ENCODE measurements at regions of chr15 and their contacts with region 1.

Region 1: DNA sequence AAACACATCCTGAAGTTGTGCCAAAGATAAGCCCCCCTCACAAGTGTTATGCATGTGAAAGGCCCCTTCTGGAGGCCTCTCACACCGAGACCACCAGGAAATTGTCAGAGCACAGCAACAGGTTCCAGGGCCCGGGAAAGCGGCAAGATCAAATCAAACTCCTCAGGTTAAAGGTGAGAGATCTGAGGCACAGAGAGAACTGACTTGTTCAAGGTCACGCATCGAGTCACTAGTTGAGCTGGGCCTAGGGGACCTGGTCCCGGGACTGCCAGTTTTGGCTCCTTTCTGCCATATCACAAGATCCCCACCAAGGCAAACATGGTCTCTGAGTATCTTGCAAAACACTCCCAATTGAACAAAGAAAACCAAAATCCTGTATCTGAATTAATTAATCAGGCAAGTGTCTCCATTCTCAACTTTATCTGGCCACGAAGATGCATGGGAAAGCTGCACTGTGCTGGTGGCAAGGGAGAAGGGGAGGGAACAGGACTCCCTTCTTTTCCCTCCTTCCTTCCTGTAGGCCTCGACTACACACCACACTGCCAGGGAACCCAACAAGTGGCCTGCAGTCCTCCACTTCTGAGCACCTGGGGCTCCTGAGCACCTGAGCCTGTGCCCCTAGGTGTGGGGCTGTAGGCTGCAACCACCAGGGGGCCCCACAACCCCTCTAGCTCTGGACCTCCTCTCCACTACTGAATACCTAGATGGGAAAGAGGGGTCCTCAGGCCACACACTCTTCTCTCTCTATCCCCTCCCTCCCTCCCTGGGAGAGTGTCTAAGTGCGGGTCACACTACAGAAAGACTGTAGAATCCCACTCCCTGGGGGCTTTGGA is 37.3 kb downstream of the ANP32A start:
- DNase-seq: peak; percentile 48
- ATAC-seq: peak; percentile 84
- H3K4me3 Mint-ChIP-seq: no peak overlapping the region
- H3K27ac Mint-ChIP-seq: no peak overlapping the region
- H3K4me1 Mint-ChIP-seq: peaks cover 31% of the 10 kb centered on the region
- H3K27me3 Mint-ChIP-seq: no peaks in the 10 kb centered on the region
- CTCF ChIP-seq: no peak

Region 2: GRCh38 chr15:68550481-68551295 is 232.8 kb before region 1 on chr15:
- CTCF ChIA-PET with region 1: no interaction called
- POLR2A ChIA-PET with region 1: no interaction called
- intact Hi-C with region 1: loop called (anchors 5 kb)
- DNase-seq: peak; percentile 68
- ATAC-seq: peak; percentile 67
- H3K4me3 Mint-ChIP-seq: no peak overlapping the region
- H3K27ac Mint-ChIP-seq: no peak overlapping the region
- H3K4me1 Mint-ChIP-seq: no peaks in the 10 kb centered on the region
- H3K27me3 Mint-ChIP-seq: peaks cover 22% of the 10 kb centered on the region
- CTCF ChIP-seq: peak; percentile 65

Region 3: DNA sequence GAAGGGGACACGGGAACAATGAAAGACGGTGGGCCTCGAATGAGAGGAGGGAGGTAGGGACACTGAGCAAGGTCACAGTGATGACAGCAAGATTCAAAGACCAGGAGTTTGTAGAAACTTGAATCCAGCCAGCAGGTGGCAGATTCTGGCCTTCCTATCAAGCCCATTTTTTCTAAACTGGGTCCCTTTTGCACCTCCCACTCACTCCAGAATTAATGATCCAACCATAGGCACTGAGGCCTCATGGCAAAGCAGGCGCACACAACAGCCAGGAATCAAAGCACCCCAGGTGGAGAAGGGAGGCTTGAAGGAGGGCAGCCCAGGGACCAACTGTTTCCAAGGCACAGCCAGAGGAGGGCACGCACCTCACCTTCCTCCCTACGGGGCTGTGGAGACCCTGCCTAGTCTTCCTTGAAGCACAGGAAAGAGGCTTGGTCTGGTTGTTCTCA is 52.9 kb before region 1 on chr15:
- CTCF ChIA-PET with region 1: no interaction called
- POLR2A ChIA-PET with region 1: no interaction called
- intact Hi-C with region 1: loop called (anchors 2 kb)
- DNase-seq: no peak
- ATAC-seq: no peak
- H3K4me3 Mint-ChIP-seq: no peak overlapping the region
- H3K27ac Mint-ChIP-seq: no peak overlapping the region
- H3K4me1 Mint-ChIP-seq: peaks cover 21% of the 10 kb centered on the region
- H3K27me3 Mint-ChIP-seq: peaks cover 2% of the 10 kb centered on the region
- CTCF ChIP-seq: no peak

Region 4: DNA sequence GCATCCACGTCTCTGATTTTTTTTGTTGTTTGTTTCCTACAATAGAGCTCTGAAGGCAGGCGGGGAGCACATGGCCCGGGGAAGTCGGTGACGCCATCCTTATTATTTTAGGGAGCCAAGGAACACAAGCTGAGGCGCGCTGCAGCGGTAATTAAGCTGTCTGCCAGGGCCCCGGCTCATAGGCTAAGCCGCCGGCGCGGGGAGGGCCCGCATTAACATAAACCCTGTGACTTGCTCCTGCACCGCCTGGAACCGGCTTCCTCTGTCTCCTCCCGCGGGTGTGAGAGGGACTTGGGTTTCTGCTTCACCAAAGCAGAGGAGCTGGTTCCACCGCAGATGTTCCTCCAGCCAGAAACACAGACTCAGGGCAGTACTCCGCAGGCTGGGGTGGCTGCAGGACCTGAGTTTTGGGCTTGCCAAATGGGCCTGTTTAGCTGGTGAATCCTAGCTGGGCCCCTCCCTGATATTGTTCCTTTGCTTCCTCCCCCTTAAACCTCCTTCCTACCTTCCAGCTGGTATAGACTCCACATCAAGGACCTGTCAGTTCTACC is 11.9 kb after region 1 on chr15:
- CTCF ChIA-PET with region 1: interaction called, 18 read pairs
- POLR2A ChIA-PET with region 1: no interaction called
- intact Hi-C with region 1: no loop called
- DNase-seq: peak; percentile 55
- ATAC-seq: peak; percentile 62
- H3K4me3 Mint-ChIP-seq: peak overlapping the region; percentile 75
- H3K27ac Mint-ChIP-seq: peak overlapping the region; percentile 85
- H3K4me1 Mint-ChIP-seq: peaks cover 97% of the 10 kb centered on the region
- H3K27me3 Mint-ChIP-seq: no peaks in the 10 kb centered on the region
- CTCF ChIP-seq: no peak

Region 5: GRCh38 chr15:68829068-68829467 is 45.6 kb after region 1 on chr15:
- CTCF ChIA-PET with region 1: interaction called, 41 read pairs
- POLR2A ChIA-PET with region 1: no interaction called
- intact Hi-C with region 1: loop called (anchors 1 kb)
- DNase-seq: no peak
- ATAC-seq: peak; percentile 84
- H3K4me3 Mint-ChIP-seq: no peak overlapping the region
- H3K27ac Mint-ChIP-seq: no peak overlapping the region
- H3K4me1 Mint-ChIP-seq: peaks cover 3% of the 10 kb centered on the region
- H3K27me3 Mint-ChIP-seq: peaks cover 4% of the 10 kb centered on the region
- CTCF ChIP-seq: no peak

Region 6: GRCh38 chr15:68924866-68925560 is 141.6 kb after region 1 on chr15:
- CTCF ChIA-PET with region 1: no interaction called
- POLR2A ChIA-PET with region 1: no interaction called
- intact Hi-C with region 1: loop called (anchors 1 kb)
- DNase-seq: peak; percentile 32
- ATAC-seq: peak; percentile 69
- H3K4me3 Mint-ChIP-seq: no peak overlapping the region
- H3K27ac Mint-ChIP-seq: no peak overlapping the region
- H3K4me1 Mint-ChIP-seq: peaks cover 2% of the 10 kb centered on the region
- H3K27me3 Mint-ChIP-seq: peaks cover 8% of the 10 kb centered on the region
- CTCF ChIP-seq: no peak

Measured in activated B cell treated with CpG ODN at 0.5 μM for 24 hours (primary cell).